Activated CD4-positive, alpha-beta T cell treated with anti-CD3 and anti-CD28 coated beads for 36 hours (primary cell): ENCODE measurements at regions of chr14 and their contacts with region 1.

Region 1: GRCh38 chr14:75126679-75127473 is at the start of gene NEK9:
- DNase-seq: peak; percentile 94
- ATAC-seq: peak; percentile 90
- H3K4me3 Mint-ChIP-seq: peak within 1 kb of the TSS; percentile 97
- H3K27ac Mint-ChIP-seq: peak within 1 kb of the TSS; percentile 98
- H3K4me1 Mint-ChIP-seq: peaks cover 41% of the 10 kb centered on the region
- H3K27me3 Mint-ChIP-seq: no peaks in the 10 kb centered on the region
- total RNA-seq, gene NEK9: 45.2 to 58.7 TPM

Region 2: DNA sequence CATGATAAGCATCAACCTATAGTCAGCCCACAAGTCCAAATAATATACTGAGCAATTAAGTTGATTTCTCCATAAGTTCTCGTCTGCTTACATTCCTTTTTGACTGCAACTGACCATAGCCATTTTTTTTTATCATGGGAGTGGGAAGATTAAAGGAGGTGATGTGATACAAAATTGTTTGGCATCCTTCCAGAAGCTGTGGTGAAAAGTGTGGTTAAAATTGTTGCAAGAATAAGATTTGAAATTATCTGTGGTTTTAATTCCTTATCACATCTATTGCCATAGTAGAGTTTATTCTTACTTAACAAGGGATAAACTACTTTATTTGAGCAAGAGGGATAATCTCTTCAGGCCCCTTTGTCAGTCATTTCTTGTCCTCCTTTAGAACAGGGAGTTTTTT is 991.5 kb before region 1 on chr14:
- CTCF ChIA-PET with region 1: no interaction called
- POLR2A ChIA-PET with region 1: no interaction called
- intact Hi-C with region 1: no loop called
- DNase-seq: no peak
- ATAC-seq: no peak
- H3K4me3 Mint-ChIP-seq: no peak overlapping the region
- H3K27ac Mint-ChIP-seq: no peak overlapping the region
- H3K4me1 Mint-ChIP-seq: peaks cover 25% of the 10 kb centered on the region
- H3K27me3 Mint-ChIP-seq: no peaks in the 10 kb centered on the region

Region 3: DNA sequence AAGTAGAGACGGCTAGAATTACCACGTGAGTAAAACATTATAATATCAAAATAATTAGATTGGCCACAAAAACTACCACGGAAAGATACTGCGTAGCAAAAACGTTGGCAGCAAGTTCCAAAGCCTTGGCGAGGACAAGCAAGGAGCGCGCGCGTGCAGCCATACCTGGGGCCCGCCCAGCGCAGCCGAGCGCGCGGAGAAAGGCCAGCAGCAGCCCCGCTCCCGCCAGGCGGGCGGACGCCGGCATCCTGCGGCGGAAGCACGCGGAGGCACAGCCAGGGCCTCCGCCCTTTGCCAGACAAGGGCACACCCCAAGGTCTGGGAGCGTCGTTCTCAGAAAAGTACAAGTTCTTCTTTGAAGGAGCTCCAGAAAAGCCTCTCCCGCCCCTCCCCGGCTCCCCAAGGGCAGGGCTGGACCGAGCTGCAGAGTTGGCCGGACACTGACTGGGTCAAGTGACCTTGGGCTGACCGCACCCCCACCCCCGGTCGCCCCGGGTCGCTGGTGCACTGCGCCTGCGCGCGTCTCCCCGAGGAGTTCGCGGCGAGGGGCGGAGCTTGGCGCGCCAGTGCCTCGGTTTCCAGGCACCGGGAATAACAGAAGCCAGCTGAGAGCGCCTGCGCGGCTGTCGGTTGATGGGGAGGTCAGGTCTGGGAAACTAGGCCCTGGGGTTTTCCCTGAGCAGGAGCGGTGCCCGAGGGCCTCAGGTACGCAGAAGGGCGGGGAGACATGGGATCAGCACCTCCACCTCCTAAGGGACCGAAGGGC is 57.6 kb before region 1 on chr14 and contains the start of gene ZC2HC1C:
- CTCF ChIA-PET with region 1: interaction called, 3 read pairs
- POLR2A ChIA-PET with region 1: interaction called, 4 read pairs
- intact Hi-C with region 1: loop called in 1 of 2 experiments (anchors 2 kb)
- DNase-seq: peak; percentile 79
- ATAC-seq: peak; percentile 93
- H3K4me3 Mint-ChIP-seq: no peak within 1 kb of the TSS
- H3K27ac Mint-ChIP-seq: peak within 1 kb of the TSS; percentile 82
- H3K4me1 Mint-ChIP-seq: peaks cover 9% of the 10 kb centered on the region
- H3K27me3 Mint-ChIP-seq: no peaks in the 10 kb centered on the region
- total RNA-seq, gene ZC2HC1C: 1.2 to 1.3 TPM

Region 4: GRCh38 chr14:75258615-75259466 is 132.0 kb after region 1 on chr14:
- CTCF ChIA-PET with region 1: interaction called, 3 read pairs
- POLR2A ChIA-PET with region 1: interaction called, 5 read pairs
- intact Hi-C with region 1: loop called in 1 of 2 experiments (anchors 1 kb)
- DNase-seq: peak; percentile 99
- ATAC-seq: peak; percentile 98
- H3K4me3 Mint-ChIP-seq: peak overlapping the region; percentile 77
- H3K27ac Mint-ChIP-seq: peak overlapping the region; percentile 97
- H3K4me1 Mint-ChIP-seq: peaks cover 24% of the 10 kb centered on the region
- H3K27me3 Mint-ChIP-seq: no peaks in the 10 kb centered on the region

Region 5: DNA sequence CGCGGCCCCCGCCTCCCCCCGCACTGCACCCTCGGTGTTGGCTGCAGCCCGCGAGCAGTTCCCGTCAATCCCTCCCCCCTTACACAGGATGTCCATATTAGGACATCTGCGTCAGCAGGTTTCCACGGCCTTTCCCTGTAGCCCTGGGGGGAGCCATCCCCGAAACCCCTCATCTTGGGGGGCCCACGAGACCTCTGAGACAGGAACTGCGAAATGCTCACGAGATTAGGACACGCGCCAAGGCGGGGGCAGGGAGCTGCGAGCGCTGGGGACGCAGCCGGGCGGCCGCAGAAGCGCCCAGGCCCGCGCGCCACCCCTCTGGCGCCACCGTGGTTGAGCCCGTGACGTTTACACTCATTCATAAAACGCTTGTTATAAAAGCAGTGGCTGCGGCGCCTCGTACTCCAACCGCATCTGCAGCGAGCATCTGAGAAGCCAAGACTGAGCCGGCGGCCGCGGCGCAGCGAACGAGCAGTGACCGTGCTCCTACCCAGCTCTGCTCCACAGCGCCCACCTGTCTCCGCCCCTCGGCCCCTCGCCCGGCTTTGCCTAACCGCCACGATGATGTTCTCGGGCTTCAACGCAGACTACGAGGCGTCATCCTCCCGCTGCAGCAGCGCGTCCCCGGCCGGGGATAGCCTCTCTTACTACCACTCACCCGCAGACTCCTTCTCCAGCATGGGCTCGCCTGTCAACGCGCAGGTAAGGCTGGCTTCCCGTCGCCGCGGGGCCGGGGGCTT is 151.7 kb after region 1 on chr14 and contains the start of gene FOS:
- CTCF ChIA-PET with region 1: interaction called, 4 read pairs
- POLR2A ChIA-PET with region 1: interaction called, 3 read pairs
- intact Hi-C with region 1: loop called in 1 of 2 experiments (anchors 1 kb)
- DNase-seq: peak; percentile 92
- ATAC-seq: peak; percentile 91
- H3K4me3 Mint-ChIP-seq: peak within 1 kb of the TSS; percentile 85
- H3K27ac Mint-ChIP-seq: peak within 1 kb of the TSS; percentile 95
- H3K4me1 Mint-ChIP-seq: peaks cover 44% of the 10 kb centered on the region
- H3K27me3 Mint-ChIP-seq: peaks cover 24% of the 10 kb centered on the region
- total RNA-seq, gene FOS: 16.0 to 21.1 TPM

Region 6: DNA sequence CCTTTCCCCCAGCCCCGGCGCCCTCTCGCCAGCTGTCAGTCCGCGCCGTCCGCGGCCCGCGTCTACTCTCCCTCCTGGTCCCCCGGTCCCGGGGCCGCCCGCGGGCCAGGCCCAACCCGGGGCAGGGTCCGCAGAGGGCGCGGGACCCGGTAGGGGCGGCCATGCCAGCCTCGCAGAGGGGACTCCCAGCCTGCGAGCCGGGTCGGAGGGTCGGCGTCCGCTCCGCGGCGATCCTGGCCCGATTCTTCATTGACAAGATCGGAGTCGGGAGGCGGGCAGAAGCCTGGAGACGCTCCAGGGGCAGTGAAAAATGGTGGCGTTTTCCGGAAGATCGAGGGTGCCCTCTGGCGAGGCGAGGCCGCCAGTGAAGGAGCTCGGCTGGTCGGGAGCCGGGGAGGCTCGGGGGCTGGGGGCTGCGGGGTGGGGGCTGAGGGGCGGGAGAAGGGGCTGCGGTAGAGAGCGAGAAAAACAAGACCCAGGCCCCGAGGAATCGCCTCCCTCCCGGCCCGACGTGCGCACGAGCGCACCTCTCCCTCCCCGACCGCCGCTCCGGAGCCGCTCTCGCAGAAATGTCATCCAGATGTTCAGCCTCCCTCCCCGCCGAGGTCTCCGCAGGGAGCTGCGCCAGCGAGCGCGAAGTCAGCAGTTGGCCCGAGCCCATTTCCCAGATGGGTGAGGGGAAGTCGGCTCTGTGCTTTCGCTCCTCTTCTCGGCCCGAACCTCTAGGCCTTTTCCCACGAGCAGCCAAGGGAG is 855.6 kb after region 1 on chr14:
- CTCF ChIA-PET with region 1: no interaction called
- POLR2A ChIA-PET with region 1: no interaction called
- intact Hi-C with region 1: loop called in 1 of 2 experiments (anchors 5 kb)
- DNase-seq: peak; percentile 86
- ATAC-seq: peak; percentile 62
- H3K4me3 Mint-ChIP-seq: peak overlapping the region; percentile 67
- H3K27ac Mint-ChIP-seq: peak overlapping the region; percentile 78
- H3K4me1 Mint-ChIP-seq: peaks cover 42% of the 10 kb centered on the region
- H3K27me3 Mint-ChIP-seq: no peaks in the 10 kb centered on the region